AG04449 (cell line): ENCODE measurements at regions of chr6 and their contacts with region 1.

Region 1: GRCh38 chr6:27146706-27147505 is 100.6 kb upstream of the PRSS16 start:
- DNase-seq: peak; percentile 100
- H3K4me3 ChIP-seq: peak overlapping the region; percentile 88
- CTCF ChIP-seq: no peak

Region 2: DNA sequence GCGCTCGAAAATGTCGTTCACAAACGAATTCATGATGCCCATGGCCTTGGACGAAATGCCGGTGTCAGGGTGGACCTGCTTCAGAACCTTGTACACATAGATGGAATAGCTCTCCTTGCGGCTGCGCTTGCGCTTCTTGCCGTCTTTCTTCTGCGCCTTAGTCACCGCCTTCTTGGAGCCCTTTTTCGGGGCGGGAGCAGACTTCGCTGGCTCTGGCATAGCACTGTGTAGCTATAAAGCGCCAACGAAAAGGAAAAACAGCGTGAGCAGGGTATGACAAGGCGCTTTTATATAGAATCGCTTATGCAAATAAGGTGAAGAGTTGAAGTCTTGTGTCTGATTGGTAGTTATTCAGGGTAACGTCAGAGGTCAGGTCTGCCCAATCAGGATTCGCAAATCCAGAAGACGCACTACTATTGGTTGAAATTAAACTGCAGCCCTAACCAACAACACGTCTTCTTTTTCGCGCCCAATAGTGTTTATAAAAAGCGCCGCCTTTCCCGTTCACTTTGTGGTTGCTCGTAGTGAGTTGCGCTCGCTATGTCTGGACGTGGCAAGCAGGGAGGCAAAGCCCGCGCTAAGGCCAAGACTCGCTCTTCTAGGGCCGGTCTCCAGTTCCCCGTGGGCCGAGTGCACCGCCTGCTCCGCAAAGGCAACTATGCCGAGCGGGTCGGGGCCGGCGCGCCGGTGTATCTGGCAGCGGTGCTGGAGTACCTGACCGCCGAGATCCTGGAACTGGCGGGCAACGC is 14.2 kb before region 1 on chr6:
- CTCF ChIA-PET with region 1: interaction called, 34 read pairs
- POLR2A ChIA-PET with region 1: interaction called, 152 read pairs
- DNase-seq: peak; percentile 100
- H3K4me3 ChIP-seq: peak overlapping the region; percentile 65
- CTCF ChIP-seq: no peak

Region 3: GRCh38 chr6:27177485-27178406 is 30.8 kb after region 1 on chr6:
- CTCF ChIA-PET with region 1: no interaction called
- POLR2A ChIA-PET with region 1: interaction called, 12 read pairs
- DNase-seq: peak; percentile 73
- H3K4me3 ChIP-seq: peak overlapping the region; percentile 100
- CTCF ChIP-seq: peak; percentile 42

Region 4: DNA sequence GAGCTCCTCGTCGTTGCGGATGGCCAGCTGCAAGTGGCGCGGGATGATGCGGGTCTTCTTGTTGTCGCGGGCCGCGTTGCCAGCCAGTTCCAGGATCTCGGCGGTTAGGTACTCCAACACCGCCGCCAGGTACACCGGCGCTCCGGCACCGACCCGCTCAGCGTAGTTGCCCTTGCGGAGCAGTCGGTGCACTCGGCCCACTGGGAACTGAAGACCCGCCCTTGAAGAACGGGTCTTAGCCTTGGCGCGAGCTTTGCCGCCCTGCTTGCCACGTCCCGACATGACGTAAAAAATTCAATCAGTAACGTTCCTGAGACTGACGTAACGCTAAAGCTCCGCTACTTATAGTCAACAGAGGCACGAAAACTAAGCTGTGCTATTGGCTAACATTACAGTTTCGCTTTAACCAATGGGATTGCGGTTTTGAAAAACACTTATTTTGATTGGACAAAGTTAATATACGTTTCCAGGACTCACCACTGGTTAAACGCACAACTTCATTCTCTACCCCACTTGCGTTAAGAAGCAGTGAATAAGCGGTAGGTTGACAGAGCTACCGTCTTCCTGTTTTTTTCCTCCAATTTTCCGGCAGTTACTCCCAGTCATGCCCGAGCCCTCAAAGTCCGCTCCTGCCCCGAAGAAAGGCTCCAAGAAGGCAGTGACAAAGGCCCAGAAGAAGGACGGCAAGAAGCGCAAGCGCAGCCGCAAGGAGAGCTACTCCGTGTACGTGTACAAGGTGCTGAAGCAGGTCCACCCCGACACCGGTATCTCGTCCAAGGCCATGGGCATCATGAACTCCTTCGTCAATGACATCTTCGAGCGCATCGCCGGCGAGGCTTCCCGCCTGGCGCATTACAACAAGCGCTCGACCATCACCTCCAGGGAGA is 691.4 kb after region 1 on chr6:
- CTCF ChIA-PET with region 1: no interaction called
- POLR2A ChIA-PET with region 1: interaction called, 16 read pairs
- DNase-seq: peak; percentile 98
- H3K4me3 ChIP-seq: peak overlapping the region; percentile 77
- CTCF ChIP-seq: no peak